A549 (cell line): ENCODE measurements at regions of chr19 and their contacts with region 1.

Region 1: GRCh38 chr19:16454351-16454918 is 17.3 kb downstream of the EPS15L1 start:
- DNase-seq: no peak
- ATAC-seq: no peak
- H3K4me3 ChIP-seq: no peak overlapping the region
- H3K27ac ChIP-seq: no peak overlapping the region
- H3K4me1 ChIP-seq: peaks cover 16% of the 10 kb centered on the region
- CTCF ChIP-seq: no peak
- EP300 ChIP-seq: no peak
- POLR2A ChIP-seq: no peak
- RAD21 ChIP-seq: no peak

Region 2: GRCh38 chr19:16441661-16442162 is 12.7 kb before region 1 on chr19:
- CTCF ChIA-PET with region 1: interaction called, 10 read pairs
- POLR2A ChIA-PET with region 1: no interaction called
- DNase-seq: peak; percentile 16 to 24
- ATAC-seq: peak; percentile 73 to 88; a peak in 5 of 6 replicates
- H3K4me3 ChIP-seq: no peak overlapping the region
- H3K27ac ChIP-seq: no peak overlapping the region
- H3K4me1 ChIP-seq: no peaks in the 10 kb centered on the region
- CTCF ChIP-seq: no peak
- EP300 ChIP-seq: no peak
- POLR2A ChIP-seq: no peak
- RAD21 ChIP-seq: peak in 1 of 2 experiments; percentile 29; a peak in 1 of 5 replicates